K562 (cell line): ENCODE measurements at regions of chr2 and their contacts with region 1.

Region 1: DNA sequence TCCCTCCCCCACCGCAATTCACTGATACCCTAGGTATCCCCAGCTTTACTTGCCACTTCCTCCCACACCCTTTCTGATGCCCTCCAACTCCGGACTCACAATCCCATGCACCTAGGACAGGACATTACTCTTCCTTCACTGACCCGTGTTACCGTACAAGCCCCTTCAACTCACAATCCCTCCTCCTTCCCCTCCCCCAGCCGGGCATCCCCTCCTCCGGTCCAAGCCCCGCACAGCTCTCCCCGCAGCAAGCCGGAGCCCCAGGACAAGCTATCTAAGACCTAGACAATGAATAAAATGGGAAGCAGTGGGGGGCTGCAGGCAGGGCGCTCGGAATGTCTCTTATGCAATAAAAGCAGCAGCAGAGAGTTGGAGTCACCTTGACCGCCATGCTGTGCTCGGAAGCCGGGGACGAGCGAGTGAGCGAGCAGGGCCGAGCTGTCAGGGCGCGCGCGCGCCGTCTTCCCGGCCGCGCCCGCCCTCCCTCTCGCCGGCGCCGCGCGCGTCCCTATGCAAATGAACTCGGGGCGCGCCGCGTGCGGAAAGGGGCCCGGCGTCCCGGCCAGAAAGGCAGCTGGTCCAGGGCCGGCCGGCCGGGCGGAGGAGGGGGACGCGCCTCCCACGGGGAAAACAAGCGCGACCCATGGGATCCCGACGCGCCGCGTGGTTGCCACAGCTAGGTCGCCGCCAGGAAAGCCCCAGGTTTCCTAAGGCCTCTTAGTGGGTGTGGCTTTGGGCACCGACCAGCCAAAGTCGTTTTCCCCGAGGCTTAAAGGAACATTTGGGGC is at the start of gene SLC25A12:
- DNase-seq: peak; percentile 87 to 95 (median 91)
- ATAC-seq: peak; percentile 97
- H3K4me3 ChIP-seq: peak within 1 kb of the TSS; percentile 79
- H3K27ac ChIP-seq: peak within 1 kb of the TSS; percentile 86
- H3K4me1 ChIP-seq: peaks cover 5 to 12% of the 10 kb centered on the region in 2 experiments; a peak in 3 of 5 replicates
- H3K27me3 ChIP-seq: no peaks in the 10 kb centered on the region
- CTCF ChIP-seq: no peak
- EP300 ChIP-seq: no peak
- POLR2A ChIP-seq: peak; percentile 89
- RAD21 ChIP-seq: no peak
- polyA plus RNA-seq, gene SLC25A12: 18.3 to 31.5 TPM

Region 2: DNA sequence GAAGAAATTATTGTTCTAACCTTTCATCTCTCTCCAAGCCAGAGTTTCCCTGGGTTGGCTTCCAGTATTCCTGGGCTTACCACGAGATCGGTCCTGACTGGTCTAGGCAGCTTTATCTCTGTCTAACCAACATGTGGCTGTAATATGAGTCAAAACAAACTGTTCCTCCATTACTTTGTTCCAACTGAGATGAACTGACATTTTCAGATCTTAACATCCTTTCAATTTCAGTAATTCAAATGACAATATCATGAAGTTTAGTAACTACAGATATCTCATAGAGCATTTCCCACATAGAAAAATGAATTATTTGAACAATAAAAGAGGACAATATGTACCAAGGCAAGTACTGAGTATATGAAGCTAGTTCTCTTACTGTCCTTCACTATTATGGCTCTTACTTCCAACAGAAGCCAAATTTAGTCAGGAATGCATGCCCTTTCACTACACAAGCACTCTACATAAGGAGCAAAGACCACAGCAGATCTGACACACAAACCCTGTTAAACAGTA is 15.5 kb before region 1 on chr2:
- CTCF ChIA-PET with region 1: no interaction called
- POLR2A ChIA-PET with region 1: interaction called, 78 read pairs
- in situ Hi-C with region 1: no loop called
- intact Hi-C with region 1: no loop called
- DNase-seq: peak in 2 of 4 experiments; percentile 73 to 77
- ATAC-seq: peak; percentile 95
- H3K4me3 ChIP-seq: no peak overlapping the region
- H3K27ac ChIP-seq: peak overlapping the region; percentile 61
- H3K4me1 ChIP-seq: peaks cover 0 to 15% of the 10 kb centered on the region in 2 experiments; a peak in 3 of 5 replicates
- H3K27me3 ChIP-seq: no peaks in the 10 kb centered on the region
- CTCF ChIP-seq: no peak
- EP300 ChIP-seq: 0 out of 2 replicates have a peak, but pooled peaks have one; percentile 37
- POLR2A ChIP-seq: no peak
- RAD21 ChIP-seq: no peak

Region 3: DNA sequence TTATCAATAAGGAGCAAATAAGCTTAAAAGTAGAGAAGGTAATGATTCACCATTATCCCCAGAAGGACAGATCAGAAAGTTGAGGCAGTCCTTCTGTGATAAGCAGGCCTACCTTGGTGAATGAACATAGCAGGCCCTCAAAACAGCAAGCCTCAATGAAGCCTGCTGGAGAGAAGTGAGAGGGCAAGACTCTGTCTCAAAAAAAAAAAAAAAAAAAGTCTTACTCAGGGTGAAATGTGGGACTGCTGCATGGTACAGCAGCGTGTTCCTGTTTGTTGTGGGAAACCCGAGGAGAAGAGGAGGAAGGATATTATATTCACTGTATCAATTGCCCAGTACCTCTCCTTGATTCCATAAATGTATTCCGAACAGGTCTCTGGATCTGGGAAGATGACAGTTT is 19.5 kb after region 1 on chr2:
- CTCF ChIA-PET with region 1: no interaction called
- POLR2A ChIA-PET with region 1: interaction called, 14 read pairs
- in situ Hi-C with region 1: no loop called
- intact Hi-C with region 1: no loop called
- DNase-seq: no peak
- ATAC-seq: peak; percentile 40
- H3K4me3 ChIP-seq: no peak overlapping the region
- H3K27ac ChIP-seq: no peak overlapping the region
- H3K4me1 ChIP-seq: no peaks in the 10 kb centered on the region
- H3K27me3 ChIP-seq: no peaks in the 10 kb centered on the region
- CTCF ChIP-seq: no peak
- EP300 ChIP-seq: no peak
- POLR2A ChIP-seq: no peak
- RAD21 ChIP-seq: no peak